Sigmoid colon (tissue), 7 donors: ENCODE measurements at regions of chr1 and their contacts with region 1.

Region 1: DNA sequence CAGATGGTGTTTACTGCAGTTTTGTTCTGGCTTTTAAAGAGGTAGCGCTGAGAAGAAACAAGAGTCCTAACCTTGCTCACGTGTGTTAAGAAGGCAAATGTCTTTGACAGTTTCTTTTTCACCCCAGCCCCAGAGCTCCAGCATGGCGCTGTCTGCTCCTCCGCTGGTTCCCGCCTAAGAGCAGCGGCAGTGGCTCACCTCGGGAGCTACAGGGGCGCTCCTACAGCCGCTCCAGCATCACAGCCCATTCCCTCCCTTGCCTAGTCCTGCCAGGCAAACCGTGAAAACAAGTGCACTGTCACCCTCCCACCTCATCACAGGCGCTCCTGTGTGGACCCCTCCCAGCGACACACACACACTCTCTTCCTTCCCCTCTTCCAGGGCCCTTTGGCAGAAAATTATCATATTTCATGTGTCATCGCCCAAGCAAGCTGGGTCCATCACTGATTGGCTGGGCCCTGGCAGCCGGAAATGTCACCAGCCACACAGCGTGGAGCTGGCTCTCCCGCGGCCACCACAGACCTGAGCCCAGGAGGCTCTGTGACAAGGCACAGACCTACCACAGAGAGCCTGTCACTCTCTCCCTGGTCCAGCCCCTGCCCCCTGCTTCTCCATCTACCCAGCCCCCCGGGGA is 1.2 kb upstream of the HIVEP3 start:
- DNase-seq: no peak
- H3K4me3 ChIP-seq: peak overlapping the region in 3 of 4 donors; percentile 9 to 29 (median 19)
- H3K27ac ChIP-seq: peak overlapping the region in 1 of 4 donors; percentile 2
- H3K4me1 ChIP-seq: peaks cover 0 to 35% (median 29%) of the 10 kb centered on the region in 4 donors
- H3K27me3 ChIP-seq: no peaks in the 10 kb centered on the region
- CTCF ChIP-seq: no peak
- EP300 ChIP-seq: no peak
- POLR2A ChIP-seq: no peak

Region 2: DNA sequence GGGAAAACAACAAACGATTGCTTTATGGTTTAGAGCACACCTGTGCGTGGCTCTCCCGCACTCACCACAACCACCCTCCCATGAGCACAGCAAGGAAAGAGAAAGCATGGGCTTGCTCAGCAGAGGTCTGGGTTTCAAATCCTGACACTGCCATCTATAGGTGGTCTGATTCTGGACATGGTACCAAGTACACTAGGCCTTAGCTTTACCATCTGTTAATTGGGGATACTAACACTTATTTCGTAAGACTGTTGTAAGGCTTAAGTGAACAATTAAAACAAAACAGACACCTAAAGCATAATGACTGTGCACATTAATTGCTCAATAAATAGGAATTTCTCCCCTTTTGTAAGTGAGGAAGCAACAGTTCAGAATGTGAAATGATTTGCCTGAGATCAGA is 51.3 kb before region 1 on chr1:
- intact Hi-C with region 1: no loop called
- DNase-seq: no peak
- H3K4me3 ChIP-seq: no peak overlapping the region
- H3K27ac ChIP-seq: no peak overlapping the region
- H3K4me1 ChIP-seq: no peaks in the 10 kb centered on the region
- H3K27me3 ChIP-seq: no peaks in the 10 kb centered on the region
- CTCF ChIP-seq: no peak
- EP300 ChIP-seq: no peak
- POLR2A ChIP-seq: no peak

Region 3: GRCh38 chr1:42035830-42036604 is 116.1 kb after region 1 on chr1:
- intact Hi-C with region 1: loop called (anchors 2 kb)
- DNase-seq: peak; percentile 98
- H3K4me3 ChIP-seq: peak overlapping the region; percentile 32 to 98 (median 82)
- H3K27ac ChIP-seq: peak overlapping the region; percentile 76 to 85 (median 82)
- H3K4me1 ChIP-seq: peaks cover 0 to 11% (median 11%) of the 10 kb centered on the region in 4 donors
- H3K27me3 ChIP-seq: no peaks in the 10 kb centered on the region
- CTCF ChIP-seq: no peak
- EP300 ChIP-seq: no peak
- POLR2A ChIP-seq: peak in 1 of 2 donors; percentile 14